Naive thymus-derived CD4-positive, alpha-beta T cell (primary cell): ENCODE measurements at regions of chr22 and their contacts with region 1.

Region 1: DNA sequence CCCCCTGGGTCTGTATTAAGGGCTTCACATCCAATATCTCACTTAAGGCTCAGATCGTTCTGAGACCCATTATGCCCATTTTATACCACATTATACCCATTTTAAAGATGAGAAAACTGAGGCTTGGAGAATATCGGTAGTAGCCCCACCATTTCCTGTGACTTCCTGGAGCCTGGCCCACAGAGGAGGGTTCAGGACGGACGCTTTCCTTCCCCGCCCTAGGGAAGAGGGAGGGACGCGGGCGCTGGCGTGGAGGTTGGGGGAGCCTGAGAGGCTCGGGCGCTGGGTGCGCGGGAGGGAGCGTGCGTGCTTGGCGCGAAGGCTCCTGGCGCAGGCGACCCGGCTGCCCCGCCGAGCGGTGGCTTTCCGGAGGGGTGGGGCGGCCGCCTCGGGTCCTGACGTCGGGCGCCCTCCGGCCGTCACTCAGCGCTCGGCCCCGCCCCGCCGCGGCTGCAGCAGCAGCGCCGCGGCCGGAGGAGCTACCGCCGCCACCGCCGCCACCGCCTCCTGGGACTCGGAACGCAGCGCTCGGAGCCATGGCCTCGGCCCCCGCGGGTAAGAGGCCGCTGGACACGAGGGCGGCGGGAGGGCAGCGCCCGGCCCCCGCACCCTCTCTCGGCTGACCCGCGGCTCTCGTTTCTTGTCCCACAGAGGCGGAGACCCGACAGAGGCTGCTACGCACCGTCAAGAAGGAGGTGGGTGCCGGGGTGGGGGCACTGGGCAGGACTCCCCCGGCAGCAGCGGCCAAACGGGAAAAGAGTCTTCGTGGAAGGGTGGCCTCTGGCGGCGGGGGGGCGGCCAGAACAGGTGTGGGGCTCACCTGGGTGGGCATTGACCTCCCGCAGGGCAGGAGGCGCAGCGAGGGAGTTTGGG is at the start of gene SGSM1:
- DNase-seq: peak; percentile 40 to 83 (median 74)
- ATAC-seq: peak; percentile 92
- H3K4me3 ChIP-seq: peak within 1 kb of the TSS; percentile 65
- H3K4me3 Mint-ChIP-seq: peak within 1 kb of the TSS; percentile 52 to 82 (median 76)
- H3K27ac ChIP-seq: peak within 1 kb of the TSS; percentile 57
- H3K27ac Mint-ChIP-seq: peak within 1 kb of the TSS; percentile 6 to 85 (median 28)
- H3K4me1 ChIP-seq: no peaks in the 10 kb centered on the region
- H3K4me1 Mint-ChIP-seq: peaks cover 6 to 26% (median 7%) of the 10 kb centered on the region in 7 donors
- H3K27me3 ChIP-seq: no peaks in the 10 kb centered on the region
- H3K27me3 Mint-ChIP-seq: peaks cover 0 to 12% (median 0%) of the 10 kb centered on the region in 5 donors
- total RNA-seq, gene SGSM1: 0.29 to 3.3 (median 2.9) TPM

Region 2: DNA sequence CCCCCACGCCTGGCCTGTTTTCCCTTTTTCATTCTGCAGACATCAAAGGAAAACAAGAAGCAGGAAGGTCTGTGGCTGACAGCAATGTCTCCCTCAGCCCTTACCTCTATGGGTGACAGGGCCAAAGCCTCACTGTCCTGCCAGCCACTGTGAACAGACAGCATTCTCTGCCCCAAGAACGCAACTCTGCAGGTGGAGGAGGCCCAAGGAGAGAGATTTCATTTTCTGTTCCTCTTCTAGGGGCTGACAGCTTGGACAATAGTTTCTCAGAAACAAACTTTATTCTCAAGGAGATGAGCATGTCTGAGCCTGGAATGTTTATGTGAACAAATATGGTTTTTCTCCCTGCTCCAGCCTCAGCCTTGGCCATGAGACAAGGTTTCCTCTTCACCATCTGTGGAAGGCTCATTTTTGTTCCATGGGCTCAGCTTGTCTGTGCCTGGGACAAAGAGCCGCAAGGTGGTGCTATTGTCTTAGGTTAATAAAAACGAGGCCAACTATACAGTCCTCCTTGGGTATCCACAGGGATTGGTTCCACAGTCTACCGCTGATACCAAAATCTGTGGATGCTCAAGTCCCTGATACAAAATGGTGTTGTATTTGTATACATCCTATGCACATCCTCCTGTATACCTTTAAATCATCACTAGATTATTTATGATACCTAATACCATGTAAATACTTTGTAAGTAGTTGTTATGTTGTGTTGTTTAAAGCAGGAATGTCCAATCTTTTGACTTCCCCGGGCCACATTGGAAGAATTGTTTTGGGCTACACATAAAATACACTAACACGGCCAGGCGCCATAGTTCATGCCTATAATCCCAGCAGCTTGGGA is 37.3 kb before region 1 on chr22:
- CTCF ChIA-PET with region 1: interaction called, 5 read pairs
- POLR2A ChIA-PET with region 1: no interaction called
- intact Hi-C with region 1: loop called in 1 of 2 experiments (anchors 1 kb)
- DNase-seq: peak in 5 of 9 donors; percentile 12 to 48 (median 21)
- ATAC-seq: peak; percentile 42
- H3K4me3 ChIP-seq: no peak overlapping the region
- H3K4me3 Mint-ChIP-seq: no peak overlapping the region
- H3K27ac ChIP-seq: no peak overlapping the region
- H3K27ac Mint-ChIP-seq: no peak overlapping the region
- H3K4me1 ChIP-seq: no peaks in the 10 kb centered on the region
- H3K4me1 Mint-ChIP-seq: peaks cover 0 to 6% (median 0%) of the 10 kb centered on the region in 7 donors
- H3K27me3 ChIP-seq: no peaks in the 10 kb centered on the region
- H3K27me3 Mint-ChIP-seq: peaks cover 0 to 19% (median 5%) of the 10 kb centered on the region in 5 donors

Region 3: DNA sequence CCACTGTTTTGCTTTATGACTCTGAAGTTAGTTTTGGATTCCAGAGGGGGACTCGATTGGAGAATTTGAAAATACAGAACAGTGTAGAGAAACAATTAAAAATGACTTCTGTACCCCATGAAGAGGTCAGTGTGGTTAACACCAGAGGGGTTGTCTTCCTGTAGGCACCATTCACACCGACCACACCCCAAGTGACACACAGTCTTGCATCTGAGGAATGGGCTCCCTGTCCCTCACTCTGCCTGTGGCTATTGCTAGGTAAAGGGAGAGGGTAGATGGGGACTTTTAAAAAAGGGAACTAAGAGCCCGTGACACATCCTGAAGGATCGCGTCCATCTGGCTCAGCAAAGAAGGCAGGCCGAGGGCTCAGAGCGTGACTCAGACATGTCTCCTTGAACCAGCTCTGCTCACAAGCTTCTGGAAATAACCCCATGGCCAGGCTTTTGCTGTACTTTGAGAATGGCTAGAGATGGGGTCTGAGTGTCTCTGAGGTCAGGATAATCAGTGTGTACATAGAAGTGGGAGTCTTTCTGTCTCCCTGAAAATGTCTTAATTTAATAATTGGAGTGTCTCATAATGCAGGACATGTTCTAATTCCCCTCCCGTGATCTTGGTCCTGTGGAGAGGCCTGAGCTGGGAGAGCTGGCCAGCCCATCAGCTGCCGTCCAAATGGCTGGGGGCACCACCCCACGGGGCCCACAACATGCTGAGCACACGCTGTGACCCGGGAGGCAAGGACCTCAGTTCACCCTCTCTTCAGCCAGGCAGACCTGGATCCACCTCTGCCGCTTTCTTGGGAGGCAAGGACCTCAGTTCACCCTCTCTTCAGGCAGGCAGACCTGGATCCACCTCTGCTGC is 39.2 kb after region 1 on chr22:
- CTCF ChIA-PET with region 1: interaction called, 10 read pairs
- POLR2A ChIA-PET with region 1: interaction called, 5 read pairs
- intact Hi-C with region 1: loop called in 1 of 2 experiments (anchors 1 kb)
- DNase-seq: no peak
- ATAC-seq: peak; percentile 61
- H3K4me3 ChIP-seq: no peak overlapping the region
- H3K4me3 Mint-ChIP-seq: peak overlapping the region in 1 of 10 donors; percentile 43
- H3K27ac ChIP-seq: no peak overlapping the region
- H3K27ac Mint-ChIP-seq: no peak overlapping the region
- H3K4me1 ChIP-seq: peaks cover 0 to 12% of the 10 kb centered on the region in 2 donors
- H3K4me1 Mint-ChIP-seq: peaks cover 0 to 12% (median 4%) of the 10 kb centered on the region in 7 donors
- H3K27me3 ChIP-seq: no peaks in the 10 kb centered on the region
- H3K27me3 Mint-ChIP-seq: peaks cover 0 to 4% (median 0%) of the 10 kb centered on the region in 5 donors

Region 4: GRCh38 chr22:25067851-25068421 is 261.9 kb after region 1 on chr22:
- CTCF ChIA-PET with region 1: no interaction called
- POLR2A ChIA-PET with region 1: no interaction called
- intact Hi-C with region 1: loop called in 1 of 2 experiments (anchors 1 kb)
- DNase-seq: peak; percentile 56 to 95 (median 92)
- ATAC-seq: peak; percentile 94
- H3K4me3 ChIP-seq: peak overlapping the region; percentile 43
- H3K4me3 Mint-ChIP-seq: peak overlapping the region; percentile 81 to 94 (median 87)
- H3K27ac ChIP-seq: peak overlapping the region; percentile 76
- H3K27ac Mint-ChIP-seq: peak overlapping the region; percentile 86 to 99 (median 98)
- H3K4me1 ChIP-seq: peaks cover 63 to 67% of the 10 kb centered on the region in 2 donors
- H3K4me1 Mint-ChIP-seq: peaks cover 51 to 96% (median 89%) of the 10 kb centered on the region in 7 donors
- H3K27me3 ChIP-seq: no peaks in the 10 kb centered on the region
- H3K27me3 Mint-ChIP-seq: no peaks in the 10 kb centered on the region

Region 5: GRCh38 chr22:25395915-25396314 is 589.9 kb after region 1 on chr22:
- CTCF ChIA-PET with region 1: no interaction called
- POLR2A ChIA-PET with region 1: no interaction called
- intact Hi-C with region 1: loop called in 1 of 2 experiments (anchors 5 kb)
- DNase-seq: no peak
- ATAC-seq: no peak
- H3K4me3 ChIP-seq: no peak overlapping the region
- H3K4me3 Mint-ChIP-seq: no peak overlapping the region
- H3K27ac ChIP-seq: no peak overlapping the region
- H3K27ac Mint-ChIP-seq: peak overlapping the region in 1 of 9 donors; percentile 31
- H3K4me1 ChIP-seq: no peaks in the 10 kb centered on the region
- H3K4me1 Mint-ChIP-seq: peaks cover 19 to 38% (median 30%) of the 10 kb centered on the region in 7 donors
- H3K27me3 ChIP-seq: no peaks in the 10 kb centered on the region
- H3K27me3 Mint-ChIP-seq: no peaks in the 10 kb centered on the region